ENCODE measurements at regions of chr4 and their contacts with region 1.

Region 1: GRCh38 chr4:185395956-185396723 is 416 bp upstream of the LRP2BP start:
- DNase-seq: peak; percentile 97
- H3K4me3 ChIP-seq: peak overlapping the region; percentile 75
- H3K27ac ChIP-seq: peak overlapping the region; percentile 70
- H3K4me1 ChIP-seq: peaks cover 58% of the 10 kb centered on the region
- CTCF ChIP-seq: no peak

Region 2: DNA sequence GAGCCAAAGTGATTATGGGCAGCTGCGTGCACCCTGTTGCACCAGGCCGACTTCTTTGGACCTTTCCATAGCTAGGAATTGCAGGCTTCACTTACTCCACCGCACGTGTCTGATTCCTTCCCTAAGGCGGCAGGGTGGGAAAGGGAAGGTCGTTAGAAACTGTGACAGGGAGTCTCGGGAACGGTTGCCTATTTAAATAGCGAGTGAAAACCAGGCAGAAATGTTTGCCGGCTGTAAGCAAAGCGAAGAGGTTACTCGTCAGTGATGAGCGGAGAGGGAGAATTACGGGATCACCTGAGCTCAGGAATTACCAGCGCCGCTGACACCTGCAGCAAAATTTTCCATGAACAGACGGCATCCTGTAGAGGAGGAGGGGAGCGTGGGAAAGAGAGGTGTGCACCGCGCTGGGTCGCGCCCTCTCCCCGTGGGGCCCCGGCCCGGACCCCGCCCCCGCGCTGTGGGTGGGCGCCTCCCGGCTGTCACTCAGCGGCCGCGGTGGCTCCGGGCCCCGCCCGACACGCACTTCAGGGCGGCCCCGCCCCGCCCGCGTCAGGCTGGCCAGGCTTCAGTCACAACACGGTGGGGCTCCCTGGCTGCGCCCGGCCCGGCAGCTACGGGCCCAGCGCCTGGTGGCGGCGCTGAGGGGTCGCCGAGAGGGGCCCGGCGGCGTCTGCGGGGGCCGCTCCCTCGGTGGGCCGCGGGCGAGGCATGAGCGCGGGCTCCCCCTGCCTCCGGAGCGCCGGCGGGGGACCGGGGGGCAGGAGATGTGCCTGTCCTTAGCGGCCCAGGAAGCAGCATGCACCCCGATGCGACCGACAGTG is 186.9 kb before region 1 on chr4 and contains the start of gene SNX25:
- CTCF ChIA-PET with region 1: no interaction called
- POLR2A ChIA-PET with region 1: interaction called, 4 read pairs
- intact Hi-C with region 1: loop called (anchors 2 kb)
- DNase-seq: peak; percentile 91
- H3K4me3 ChIP-seq: peak within 1 kb of the TSS; percentile 81
- H3K27ac ChIP-seq: peak within 1 kb of the TSS; percentile 80
- H3K4me1 ChIP-seq: peaks cover 57% of the 10 kb centered on the region
- CTCF ChIP-seq: peak; percentile 33
- total RNA-seq, gene SNX25: 33.7 and 35.5 TPM in 2 replicates

Region 3: DNA sequence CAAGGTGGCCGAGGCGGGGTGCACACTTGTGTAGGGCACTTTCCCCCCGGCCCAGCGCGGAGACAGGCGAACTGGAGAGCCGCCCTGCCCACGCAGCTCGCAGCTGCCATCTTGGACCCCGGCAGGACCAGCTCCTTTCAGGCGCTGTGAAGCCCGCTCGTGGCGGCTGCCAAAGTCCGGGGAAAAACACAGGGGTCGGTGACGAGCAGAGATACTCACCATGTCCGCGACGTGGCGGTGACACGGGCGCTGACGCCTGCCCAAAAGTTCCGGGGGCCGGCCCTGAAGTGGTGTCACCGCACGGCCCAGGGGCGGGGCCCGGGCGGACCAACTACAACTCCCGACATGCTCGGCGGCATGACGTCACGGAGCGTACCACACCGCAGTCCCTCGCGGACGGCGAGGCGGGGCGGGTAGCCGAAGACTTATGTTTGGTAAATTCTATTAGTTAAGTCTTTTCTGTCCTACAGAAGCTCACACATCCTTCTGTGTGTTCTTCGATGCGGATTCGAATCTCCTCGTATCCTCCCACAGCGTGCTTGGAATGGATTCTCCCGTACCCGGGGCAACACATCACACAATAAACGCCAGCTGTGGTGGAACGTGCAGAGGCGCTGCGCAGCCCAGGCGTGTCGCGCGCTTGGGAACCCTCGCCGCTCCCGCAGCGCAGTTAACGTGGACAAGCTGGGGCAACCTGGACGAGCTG is 29.7 kb after region 1 on chr4 and contains the start of gene UFSP2:
- CTCF ChIA-PET with region 1: interaction called, 5 read pairs
- POLR2A ChIA-PET with region 1: interaction called, 33 read pairs
- intact Hi-C with region 1: no loop called
- DNase-seq: peak; percentile 94
- H3K4me3 ChIP-seq: peak within 1 kb of the TSS; percentile 88
- H3K27ac ChIP-seq: peak within 1 kb of the TSS; percentile 54
- H3K4me1 ChIP-seq: peaks cover 18% of the 10 kb centered on the region
- CTCF ChIP-seq: no peak
- total RNA-seq, gene UFSP2: 14.0 and 17.3 TPM in 2 replicates

Region 4: DNA sequence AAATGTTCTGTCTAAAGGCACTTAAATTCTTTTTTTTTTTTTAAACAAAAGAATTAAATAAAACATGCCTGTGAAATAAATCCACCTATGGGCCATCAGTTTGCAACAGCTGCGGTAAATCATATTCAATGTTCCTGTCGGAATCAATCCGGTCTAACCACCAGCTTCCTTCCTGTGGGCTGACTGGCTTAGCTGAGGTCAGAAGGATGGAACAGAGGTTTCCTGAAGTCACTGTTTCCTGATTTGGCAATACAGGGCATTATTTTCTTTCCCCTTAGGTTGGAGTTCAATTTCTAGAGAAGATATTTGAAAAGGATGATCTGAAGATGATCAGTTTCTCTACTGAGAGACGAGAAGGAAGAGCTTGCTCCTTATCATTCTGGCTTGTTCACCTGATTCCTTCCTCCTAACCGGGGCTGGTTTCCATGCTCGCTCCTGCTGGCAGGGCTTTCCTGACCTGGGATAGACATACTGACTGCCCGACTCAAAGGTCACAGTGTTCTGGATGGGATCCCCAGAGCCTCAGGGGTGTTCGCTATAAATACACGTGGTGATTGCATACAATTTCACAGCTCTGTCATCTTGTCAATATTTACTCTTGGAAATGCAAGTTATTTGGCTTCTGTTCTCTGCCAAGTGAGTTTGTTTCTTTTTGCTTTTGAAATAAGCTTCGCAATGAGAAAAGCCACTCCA is 117.5 kb after region 1 on chr4:
- CTCF ChIA-PET with region 1: no interaction called
- POLR2A ChIA-PET with region 1: no interaction called
- intact Hi-C with region 1: no loop called
- DNase-seq: no peak
- H3K4me3 ChIP-seq: no peak overlapping the region
- H3K27ac ChIP-seq: no peak overlapping the region
- H3K4me1 ChIP-seq: no peaks in the 10 kb centered on the region
- CTCF ChIP-seq: no peak